Activated CD4-positive, alpha-beta memory T cell treated with anti-CD3 and anti-CD28 coated beads, Interleukin-2, amount 10 ng/mL, durations not matched to agents 7 days and 5 days (primary cell): ENCODE measurements at regions of chr20 and their contacts with region 1.

Region 1: DNA sequence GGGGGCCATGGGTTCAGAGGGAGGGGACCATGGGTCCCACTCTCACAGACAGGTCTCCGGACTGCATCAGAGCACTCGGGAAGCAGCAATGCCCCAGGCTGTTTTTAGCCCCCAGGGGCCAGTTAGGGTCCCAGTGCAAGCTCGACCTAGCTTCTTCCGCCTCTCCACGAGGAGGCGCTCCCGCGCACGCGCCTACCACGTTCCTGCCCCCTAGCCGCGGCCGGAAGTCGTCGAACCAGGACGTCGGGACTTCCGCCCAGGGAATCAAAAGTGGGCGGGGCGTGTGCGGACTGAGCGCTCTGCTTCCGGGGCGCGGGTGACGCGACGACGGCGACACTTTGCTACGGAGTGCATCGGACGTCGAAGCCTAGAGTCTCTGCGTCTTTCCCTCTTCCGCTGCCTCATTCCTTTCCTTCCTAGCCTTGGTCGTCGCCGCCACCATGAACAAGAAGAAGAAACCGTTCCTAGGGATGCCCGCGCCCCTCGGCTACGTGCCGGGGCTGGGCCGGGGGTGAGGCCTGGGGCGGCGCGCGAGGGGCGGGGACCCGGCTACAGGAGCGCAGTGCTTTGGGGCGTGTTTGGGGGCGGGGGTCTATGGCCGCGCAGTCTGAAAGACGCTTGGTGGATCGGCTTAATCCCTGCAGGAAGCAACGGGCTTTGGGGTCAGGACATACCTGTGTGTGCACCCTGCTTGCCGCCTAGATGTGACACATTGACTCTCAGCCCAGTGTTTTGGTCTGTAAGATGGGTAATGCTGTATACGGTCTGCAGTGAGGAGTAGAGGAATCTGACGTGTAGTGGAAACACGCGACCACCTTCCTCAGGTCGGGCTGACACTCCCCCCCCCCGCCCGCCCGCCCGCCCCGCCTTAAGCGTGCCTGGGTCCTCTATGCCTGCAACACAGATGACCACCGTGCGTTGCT is at the start of gene PRPF6:
- DNase-seq: peak; percentile 97
- H3K4me3 Mint-ChIP-seq: peak within 1 kb of the TSS; percentile 87
- H3K27ac Mint-ChIP-seq: peak within 1 kb of the TSS; percentile 97
- H3K4me1 Mint-ChIP-seq: peaks cover 61% of the 10 kb centered on the region
- H3K27me3 Mint-ChIP-seq: no peaks in the 10 kb centered on the region
- total RNA-seq, gene PRPF6: 58.4 to 60.4 TPM

Region 2: GRCh38 chr20:63864847-63865640 is 116.0 kb before region 1 on chr20 and contains the start of gene TPD52L2:
- CTCF ChIA-PET with region 1: interaction called, 8 read pairs
- POLR2A ChIA-PET with region 1: interaction called, 24 read pairs
- DNase-seq: peak; percentile 99
- H3K4me3 Mint-ChIP-seq: peak within 1 kb of the TSS; percentile 83
- H3K27ac Mint-ChIP-seq: peak within 1 kb of the TSS; percentile 88
- H3K4me1 Mint-ChIP-seq: peaks cover 40% of the 10 kb centered on the region
- H3K27me3 Mint-ChIP-seq: no peaks in the 10 kb centered on the region
- total RNA-seq, gene TPD52L2: 48.2 to 48.7 TPM

Region 3: DNA sequence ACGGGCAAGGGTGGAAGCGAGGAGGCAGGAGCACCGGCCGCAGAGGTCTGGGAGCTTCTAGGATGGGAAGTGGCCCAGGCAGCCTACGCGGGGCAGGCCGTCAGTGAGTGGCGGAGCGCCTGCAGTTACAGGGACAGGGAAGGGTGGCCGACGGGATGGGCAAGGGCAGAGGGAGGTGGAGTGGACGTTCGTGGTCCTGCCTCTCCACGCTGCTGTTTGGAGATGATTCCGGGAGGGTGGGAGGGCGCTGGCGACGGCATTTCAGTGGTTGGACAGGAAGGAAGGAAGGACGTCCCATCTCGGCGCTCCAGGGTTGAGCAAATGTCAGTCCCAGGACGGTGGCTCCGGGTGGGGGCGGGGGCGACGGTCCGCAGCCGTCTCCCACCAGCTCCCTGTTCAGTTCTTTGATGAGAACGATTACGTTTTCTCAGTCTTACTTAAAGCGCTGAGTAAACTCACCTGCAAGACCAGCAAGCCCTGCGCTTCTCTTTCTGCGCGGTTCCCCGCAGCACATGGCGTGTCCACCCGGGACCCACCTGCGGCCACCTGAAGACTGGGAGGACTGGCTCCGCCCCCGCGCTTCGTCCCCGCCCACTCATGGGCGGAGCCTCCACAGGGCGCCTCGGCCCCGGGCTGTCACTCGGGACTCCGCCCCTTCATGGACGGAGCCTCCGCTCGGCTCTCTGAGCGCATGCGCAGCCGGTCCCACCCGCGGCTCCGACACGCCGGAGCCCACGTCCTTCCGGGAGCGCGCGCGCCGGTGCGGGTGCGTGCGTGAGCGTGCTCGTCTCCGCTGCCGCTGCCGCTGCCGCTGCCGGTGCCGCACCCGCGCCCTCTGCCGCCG is 86.5 kb before region 1 on chr20 and contains the start of gene DNAJC5:
- CTCF ChIA-PET with region 1: interaction called, 11 read pairs
- POLR2A ChIA-PET with region 1: interaction called, 8 read pairs
- DNase-seq: peak; percentile 97
- H3K4me3 Mint-ChIP-seq: peak within 1 kb of the TSS; percentile 95
- H3K27ac Mint-ChIP-seq: peak within 1 kb of the TSS; percentile 99
- H3K4me1 Mint-ChIP-seq: peaks cover 40% of the 10 kb centered on the region
- H3K27me3 Mint-ChIP-seq: no peaks in the 10 kb centered on the region
- total RNA-seq, gene DNAJC5: 58.6 to 59.7 TPM

Region 4: GRCh38 chr20:63955827-63956663 is 25.0 kb before region 1 on chr20 and contains the start of gene UCKL1:
- CTCF ChIA-PET with region 1: interaction called, 6 read pairs
- POLR2A ChIA-PET with region 1: interaction called, 14 read pairs
- DNase-seq: peak; percentile 90
- H3K4me3 Mint-ChIP-seq: peak within 1 kb of the TSS; percentile 79
- H3K27ac Mint-ChIP-seq: peak within 1 kb of the TSS; percentile 88
- H3K4me1 Mint-ChIP-seq: peaks cover 44% of the 10 kb centered on the region
- H3K27me3 Mint-ChIP-seq: no peaks in the 10 kb centered on the region
- total RNA-seq, gene UCKL1: 36.3 to 36.6 TPM

Region 5: DNA sequence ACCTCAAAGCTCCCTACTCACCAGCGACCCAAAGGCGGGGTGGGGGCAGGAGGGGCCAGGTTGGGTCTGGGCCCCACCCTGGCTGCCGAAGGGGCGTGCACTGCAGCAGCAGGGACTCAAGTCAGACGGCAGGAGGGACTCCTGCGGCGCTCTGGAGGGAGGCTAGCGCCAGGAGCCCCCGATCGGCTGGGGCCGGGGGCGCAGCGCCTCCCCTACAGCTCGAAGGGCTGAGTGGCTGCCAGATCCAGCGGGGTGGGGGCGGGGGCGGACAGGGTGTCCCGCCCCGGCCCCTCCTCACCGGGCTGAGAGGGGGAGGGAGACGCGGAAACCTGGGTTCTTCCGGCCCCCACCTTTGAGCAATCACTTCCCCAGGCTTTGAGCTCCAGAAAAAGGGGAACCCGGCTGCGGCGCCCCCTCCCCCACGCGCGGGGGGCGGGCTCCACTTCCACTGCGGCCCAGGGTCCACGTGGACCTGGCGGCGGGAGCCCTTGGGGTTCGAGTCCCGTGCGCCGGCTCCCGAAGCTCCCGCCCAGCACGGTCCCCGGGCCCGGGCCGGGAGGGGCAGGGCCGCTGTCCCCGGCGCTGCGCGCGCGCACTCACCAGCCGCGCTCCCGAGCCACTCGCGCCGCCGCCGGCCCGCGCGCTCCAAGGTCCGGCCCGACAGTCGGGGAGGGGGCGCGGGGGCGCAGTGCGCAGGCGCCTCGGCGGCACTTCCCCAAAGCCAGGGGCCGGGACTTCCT is 98.4 kb after region 1 on chr20 and contains the start of gene RGS19:
- CTCF ChIA-PET with region 1: interaction called, 19 read pairs
- POLR2A ChIA-PET with region 1: interaction called, 11 read pairs
- DNase-seq: peak; percentile 81
- H3K4me3 Mint-ChIP-seq: peak within 1 kb of the TSS; percentile 93
- H3K27ac Mint-ChIP-seq: peak within 1 kb of the TSS; percentile 92
- H3K4me1 Mint-ChIP-seq: peaks cover 54% of the 10 kb centered on the region
- H3K27me3 Mint-ChIP-seq: peaks cover 19% of the 10 kb centered on the region
- total RNA-seq, gene RGS19: 119 to 122 TPM

Region 6: GRCh38 chr20:64108731-64109681 is 127.9 kb after region 1 on chr20:
- CTCF ChIA-PET with region 1: no interaction called
- POLR2A ChIA-PET with region 1: no interaction called
- DNase-seq: no peak
- H3K4me3 Mint-ChIP-seq: no peak overlapping the region
- H3K27ac Mint-ChIP-seq: no peak overlapping the region
- H3K4me1 Mint-ChIP-seq: no peaks in the 10 kb centered on the region
- H3K27me3 Mint-ChIP-seq: no peaks in the 10 kb centered on the region

Region 7: GRCh38 chr20:64119681-64120341 is 138.7 kb after region 1 on chr20:
- CTCF ChIA-PET with region 1: interaction called, 27 read pairs
- POLR2A ChIA-PET with region 1: interaction called, 4 read pairs
- DNase-seq: no peak
- H3K4me3 Mint-ChIP-seq: peak overlapping the region; percentile 37
- H3K27ac Mint-ChIP-seq: no peak overlapping the region
- H3K4me1 Mint-ChIP-seq: peaks cover 10% of the 10 kb centered on the region
- H3K27me3 Mint-ChIP-seq: peaks cover 18% of the 10 kb centered on the region

Region 8: DNA sequence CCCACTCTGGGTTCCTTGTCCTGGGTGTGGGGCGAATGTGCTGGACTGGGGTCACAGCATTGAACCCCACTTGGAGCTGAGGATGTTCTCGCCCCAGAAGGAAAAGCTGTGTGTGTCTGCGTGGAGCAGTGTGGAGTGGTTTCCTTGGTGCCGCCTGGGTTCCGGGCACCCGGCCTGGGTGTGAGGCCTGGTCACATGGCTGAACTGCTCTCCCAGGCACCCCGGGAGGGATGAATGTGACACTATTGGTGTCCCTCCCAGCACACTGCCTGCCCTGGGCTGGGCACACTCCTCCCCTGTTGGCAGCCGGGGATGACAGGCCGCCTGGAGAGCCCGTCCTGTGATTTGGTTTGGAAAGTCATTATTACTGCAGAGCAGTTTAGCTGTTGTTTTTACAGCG is 195.5 kb after region 1 on chr20:
- CTCF ChIA-PET with region 1: no interaction called
- POLR2A ChIA-PET with region 1: no interaction called
- DNase-seq: no peak
- H3K4me3 Mint-ChIP-seq: no peak overlapping the region
- H3K27ac Mint-ChIP-seq: no peak overlapping the region
- H3K4me1 Mint-ChIP-seq: peaks cover 14% of the 10 kb centered on the region
- H3K27me3 Mint-ChIP-seq: no peaks in the 10 kb centered on the region